Naive thymus-derived CD4-positive, alpha-beta T cell (primary cell): ENCODE measurements at regions of chr11 and their contacts with region 1.

Region 1: DNA sequence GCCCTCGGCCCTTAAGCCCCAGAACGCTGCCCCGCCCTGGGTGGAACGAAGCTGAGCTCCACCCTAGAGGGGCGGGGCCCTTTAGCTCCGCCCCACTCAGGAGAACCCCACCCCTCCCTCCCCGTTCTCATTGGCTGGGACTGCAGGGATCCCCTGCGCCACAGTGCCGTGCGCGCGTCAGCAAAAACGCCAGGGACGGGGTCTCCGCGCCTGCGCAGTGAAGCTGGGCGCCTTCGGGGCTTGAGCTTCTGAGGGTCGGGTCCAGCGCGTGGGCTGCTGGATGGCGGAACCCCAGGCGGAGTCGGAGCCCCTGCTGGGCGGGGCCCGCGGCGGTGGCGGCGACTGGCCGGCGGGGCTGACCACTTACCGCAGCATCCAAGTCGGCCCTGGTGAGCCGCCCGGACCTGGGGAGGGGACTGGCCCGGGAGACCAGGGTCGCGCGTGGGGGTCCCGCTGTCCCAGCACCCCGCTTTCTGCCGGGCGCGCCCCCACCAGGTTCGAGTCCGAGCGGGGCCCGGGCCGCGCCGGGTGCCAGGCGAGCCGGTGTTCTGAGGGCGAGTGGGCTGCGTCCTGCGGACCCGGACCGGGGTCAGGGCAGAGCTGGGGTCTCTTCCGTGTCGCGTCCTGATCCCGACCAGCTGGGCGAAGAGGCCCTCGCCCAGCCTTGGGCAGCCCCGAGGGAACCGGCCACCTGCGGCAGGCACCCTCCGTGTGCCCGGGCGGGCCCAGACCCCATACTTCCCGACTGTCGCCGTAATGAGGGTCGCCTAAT is at the start of gene TPCN2:
- DNase-seq: peak; percentile 87 to 93 (median 91)
- ATAC-seq: peak; percentile 99
- H3K4me3 ChIP-seq: peak within 1 kb of the TSS; percentile 85
- H3K4me3 Mint-ChIP-seq: peak within 1 kb of the TSS; percentile 75 to 87 (median 82)
- H3K27ac ChIP-seq: peak within 1 kb of the TSS; percentile 98
- H3K27ac Mint-ChIP-seq: peak within 1 kb of the TSS; percentile 82 to 94 (median 89)
- H3K4me1 ChIP-seq: peaks cover 12 to 16% of the 10 kb centered on the region in 2 donors
- H3K4me1 Mint-ChIP-seq: peaks cover 4 to 35% (median 29%) of the 10 kb centered on the region in 7 donors
- H3K27me3 ChIP-seq: no peaks in the 10 kb centered on the region
- H3K27me3 Mint-ChIP-seq: peaks cover 0 to 27% (median 0%) of the 10 kb centered on the region in 5 donors
- total RNA-seq, gene TPCN2: 11.9 to 29.4 (median 21.3) TPM

Region 2: GRCh38 chr11:68030318-68031138 is 1018.4 kb before region 1 on chr11 and contains the start of gene NDUFS8:
- CTCF ChIA-PET with region 1: no interaction called
- POLR2A ChIA-PET with region 1: no interaction called
- intact Hi-C with region 1: loop called in 1 of 2 experiments (anchors 2 kb)
- DNase-seq: peak; percentile 83 to 99 (median 98)
- ATAC-seq: peak; percentile 98
- H3K4me3 ChIP-seq: peak within 1 kb of the TSS; percentile 98
- H3K4me3 Mint-ChIP-seq: peak within 1 kb of the TSS; percentile 90 to 99 (median 96)
- H3K27ac ChIP-seq: peak within 1 kb of the TSS; percentile 97
- H3K27ac Mint-ChIP-seq: peak within 1 kb of the TSS; percentile 73 to 98 (median 92)
- H3K4me1 ChIP-seq: peaks cover 11 to 16% of the 10 kb centered on the region in 2 donors
- H3K4me1 Mint-ChIP-seq: peaks cover 12 to 32% (median 23%) of the 10 kb centered on the region in 7 donors
- H3K27me3 ChIP-seq: no peaks in the 10 kb centered on the region
- H3K27me3 Mint-ChIP-seq: no peaks in the 10 kb centered on the region
- total RNA-seq, gene NDUFS8: 67.1 to 126 (median 80.1) TPM

Region 3: GRCh38 chr11:68903288-68904247 is 145.3 kb before region 1 on chr11 and contains the starts of genes IGHMBP2 and MRPL21:
- CTCF ChIA-PET with region 1: no interaction called
- POLR2A ChIA-PET with region 1: no interaction called
- intact Hi-C with region 1: loop called (anchors 1 kb)
- DNase-seq: peak; percentile 70 to 90 (median 83)
- ATAC-seq: peak; percentile 99
- H3K4me3 ChIP-seq: peak within 1 kb of the TSS; percentile 91
- H3K4me3 Mint-ChIP-seq: peak within 1 kb of the TSS; percentile 90 to 98 (median 96)
- H3K27ac ChIP-seq: peak within 1 kb of the TSS; percentile 90
- H3K27ac Mint-ChIP-seq: peak within 1 kb of the TSS; percentile 89 to 95 (median 93)
- H3K4me1 ChIP-seq: peaks cover 21% of the 10 kb centered on the region in 2 donors
- H3K4me1 Mint-ChIP-seq: peaks cover 35 to 62% (median 48%) of the 10 kb centered on the region in 7 donors
- H3K27me3 ChIP-seq: no peaks in the 10 kb centered on the region
- H3K27me3 Mint-ChIP-seq: no peaks in the 10 kb centered on the region
- total RNA-seq, gene IGHMBP2: 27.5 to 41.4 (median 32.2) TPM
- total RNA-seq, gene MRPL21: 29.6 to 71.1 (median 37.9) TPM

Region 4: GRCh38 chr11:69122642-69123431 is 73.9 kb after region 1 on chr11:
- CTCF ChIA-PET with region 1: no interaction called
- POLR2A ChIA-PET with region 1: no interaction called
- intact Hi-C with region 1: loop called in 1 of 2 experiments (anchors 1 kb)
- DNase-seq: peak in 8 of 9 donors; percentile 51 to 78 (median 60)
- ATAC-seq: peak; percentile 85
- H3K4me3 ChIP-seq: peak overlapping the region; percentile 53
- H3K4me3 Mint-ChIP-seq: peak overlapping the region; percentile 69 to 86 (median 81)
- H3K27ac ChIP-seq: peak overlapping the region; percentile 76
- H3K27ac Mint-ChIP-seq: peak overlapping the region; percentile 80 to 94 (median 88)
- H3K4me1 ChIP-seq: peaks cover 4 to 42% of the 10 kb centered on the region in 2 donors
- H3K4me1 Mint-ChIP-seq: peaks cover 24 to 57% (median 40%) of the 10 kb centered on the region in 7 donors
- H3K27me3 ChIP-seq: no peaks in the 10 kb centered on the region
- H3K27me3 Mint-ChIP-seq: no peaks in the 10 kb centered on the region

Region 5: GRCh38 chr11:69675811-69676371 is 627.0 kb after region 1 on chr11:
- CTCF ChIA-PET with region 1: no interaction called
- POLR2A ChIA-PET with region 1: no interaction called
- intact Hi-C with region 1: loop called (anchors 1 kb)
- DNase-seq: no peak
- ATAC-seq: no peak
- H3K4me3 ChIP-seq: peak overlapping the region; percentile 75
- H3K4me3 Mint-ChIP-seq: peak overlapping the region; percentile 91 to 97 (median 94)
- H3K27ac ChIP-seq: peak overlapping the region; percentile 85
- H3K27ac Mint-ChIP-seq: peak overlapping the region in 3 of 9 donors; percentile 90 to 95 (median 92)
- H3K4me1 ChIP-seq: peaks cover 15 to 19% of the 10 kb centered on the region in 2 donors
- H3K4me1 Mint-ChIP-seq: peaks cover 16 to 37% (median 25%) of the 10 kb centered on the region in 7 donors
- H3K27me3 ChIP-seq: no peaks in the 10 kb centered on the region
- H3K27me3 Mint-ChIP-seq: peaks cover 0 to 13% (median 0%) of the 10 kb centered on the region in 5 donors